Calu3 (cell line): ENCODE measurements at regions of chr3 and their contacts with region 1.

Region 1: DNA sequence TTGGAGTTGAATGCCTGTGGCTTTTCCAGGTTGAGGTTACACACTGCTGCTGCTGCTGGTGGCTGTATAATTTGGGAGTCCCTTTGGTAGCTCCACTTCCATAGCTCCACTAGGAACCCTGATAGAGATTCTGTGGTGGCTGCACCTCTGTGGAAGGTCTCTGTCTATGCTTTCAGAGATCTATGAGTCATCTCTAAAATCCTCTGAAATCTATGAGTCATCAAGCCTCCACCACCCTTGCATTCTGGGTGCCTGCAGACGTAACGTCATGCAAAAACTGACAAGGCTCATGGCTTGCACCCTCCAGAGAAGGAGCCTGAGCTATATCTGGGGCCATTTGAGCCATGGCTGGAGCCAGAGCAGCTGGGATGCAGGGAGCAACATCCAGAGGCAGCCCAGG is 1037.0 kb upstream of the CFAP20DC start:
- DNase-seq: no peak
- H3K4me3 Mint-ChIP-seq: no peak overlapping the region
- H3K27ac Mint-ChIP-seq: no peak overlapping the region
- H3K4me1 Mint-ChIP-seq: no peaks in the 10 kb centered on the region
- H3K27me3 Mint-ChIP-seq: no peaks in the 10 kb centered on the region
- CTCF ChIP-seq: no peak

Region 2: GRCh38 chr3:60010781-60011180 is 76.0 kb before region 1 on chr3:
- CTCF ChIA-PET with region 1: interaction called, 17 read pairs
- intact Hi-C with region 1: no loop called
- DNase-seq: no peak
- H3K4me3 Mint-ChIP-seq: no peak overlapping the region
- H3K27ac Mint-ChIP-seq: no peak overlapping the region
- H3K4me1 Mint-ChIP-seq: no peaks in the 10 kb centered on the region
- H3K27me3 Mint-ChIP-seq: no peaks in the 10 kb centered on the region
- CTCF ChIP-seq: no peak

Region 3: DNA sequence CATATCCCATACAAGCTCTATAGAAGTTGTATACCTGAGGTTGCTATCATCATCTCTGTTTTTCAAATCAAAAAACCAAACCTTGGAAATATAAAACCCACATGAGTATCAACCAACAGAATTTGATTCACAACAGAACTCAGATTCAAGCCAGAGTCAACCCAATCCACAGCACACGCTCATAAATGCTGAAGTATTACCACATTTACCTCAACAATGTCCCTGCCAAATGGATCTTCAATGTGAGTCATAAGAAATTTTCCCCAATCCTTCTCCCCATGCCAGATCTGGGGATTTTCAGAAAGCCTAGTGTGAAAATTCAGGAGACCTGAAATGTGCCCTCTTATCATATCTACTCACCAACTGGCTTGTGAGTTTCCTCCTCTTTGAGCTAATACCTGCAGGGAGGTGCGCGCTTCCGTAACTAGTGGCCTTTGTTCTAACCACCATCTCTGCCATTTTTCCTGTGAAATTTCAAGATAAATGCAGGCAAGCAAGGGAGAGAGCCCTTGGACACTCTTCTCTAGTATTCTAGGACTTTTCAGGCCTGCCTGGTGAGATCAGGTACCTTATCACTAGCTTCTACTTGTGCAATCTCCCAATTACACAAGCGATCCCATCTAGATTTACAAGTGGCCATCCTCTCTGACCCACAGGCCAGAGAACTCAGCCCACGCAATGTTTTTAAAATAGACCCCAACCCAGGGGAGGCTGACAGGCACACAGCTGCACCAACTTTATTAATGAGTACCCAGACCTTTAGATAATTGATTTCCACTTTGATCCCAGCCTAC is 39.9 kb after region 1 on chr3:
- CTCF ChIA-PET with region 1: no interaction called
- intact Hi-C with region 1: no loop called
- DNase-seq: no peak
- H3K4me3 Mint-ChIP-seq: no peak overlapping the region
- H3K27ac Mint-ChIP-seq: no peak overlapping the region
- H3K4me1 Mint-ChIP-seq: no peaks in the 10 kb centered on the region
- H3K27me3 Mint-ChIP-seq: no peaks in the 10 kb centered on the region
- CTCF ChIP-seq: no peak